ENCODE measurements at regions of chr12 and their contacts with region 1.

Region 1: GRCh38 chr12:124359671-124360581 is 65.0 kb downstream of the RFLNA start:
- DNase-seq: no peak
- H3K4me3 ChIP-seq: no peak overlapping the region
- H3K27ac ChIP-seq: no peak overlapping the region
- H3K4me1 ChIP-seq: peaks cover 11% of the 10 kb centered on the region
- H3K27me3 ChIP-seq: no peaks in the 10 kb centered on the region
- CTCF ChIP-seq: no peak

Region 2: GRCh38 chr12:124147575-124147974 is 212.4 kb before region 1 on chr12:
- CTCF ChIA-PET with region 1: no interaction called
- dilution Hi-C with region 1: loop called (anchors 10 kb)
- in situ Hi-C with region 1: no loop called
- intact Hi-C with region 1: no loop called
- DNase-seq: no peak
- H3K4me3 ChIP-seq: no peak overlapping the region
- H3K27ac ChIP-seq: no peak overlapping the region
- H3K4me1 ChIP-seq: no peaks in the 10 kb centered on the region
- H3K27me3 ChIP-seq: no peaks in the 10 kb centered on the region
- CTCF ChIP-seq: no peak

Region 3: GRCh38 chr12:124411281-124411878 is 51.5 kb after region 1 on chr12:
- CTCF ChIA-PET with region 1: no interaction called
- dilution Hi-C with region 1: loop called (anchors 5 kb)
- in situ Hi-C with region 1: no loop called
- intact Hi-C with region 1: no loop called
- DNase-seq: peak; percentile 87
- H3K4me3 ChIP-seq: no peak overlapping the region
- H3K27ac ChIP-seq: no peak overlapping the region
- H3K4me1 ChIP-seq: peaks cover 23% of the 10 kb centered on the region
- H3K27me3 ChIP-seq: no peaks in the 10 kb centered on the region
- CTCF ChIP-seq: no peak

Region 4: DNA sequence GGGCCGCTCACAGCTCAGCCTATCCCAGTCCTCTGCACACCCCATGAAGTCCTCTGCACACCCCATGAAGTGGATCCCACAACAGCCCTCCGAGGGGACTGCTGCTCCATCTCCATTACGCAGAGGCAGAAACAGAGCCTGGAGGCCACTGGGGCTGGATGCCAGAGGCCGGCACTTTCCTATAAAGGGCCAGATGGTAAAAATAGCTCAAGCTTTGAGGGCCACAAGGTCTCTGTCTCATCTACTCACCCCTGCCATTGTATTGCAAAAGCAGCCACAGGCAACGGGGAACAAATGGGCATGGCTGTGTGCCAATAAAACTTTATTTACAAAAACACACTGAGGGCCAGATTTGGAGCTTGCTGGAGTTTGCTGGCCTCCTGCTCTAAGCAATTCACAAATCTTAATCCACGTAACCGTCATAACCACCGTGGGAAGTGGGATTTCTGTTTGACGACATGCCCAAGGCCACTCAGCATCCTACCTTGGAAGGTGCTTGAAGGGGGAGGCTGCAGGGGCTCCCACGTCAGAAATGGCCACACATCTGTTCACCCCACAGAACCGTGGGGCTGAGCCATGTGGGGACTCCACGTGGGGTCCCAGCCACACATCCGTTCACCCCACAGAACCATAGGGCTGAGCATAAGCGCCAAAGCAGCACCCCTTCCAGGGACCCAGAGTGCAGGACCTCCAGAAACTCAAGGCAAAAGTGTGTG is 115.5 kb after region 1 on chr12:
- CTCF ChIA-PET with region 1: interaction called, 41 read pairs
- dilution Hi-C with region 1: no loop called
- in situ Hi-C with region 1: no loop called
- intact Hi-C with region 1: no loop called
- DNase-seq: no peak
- H3K4me3 ChIP-seq: no peak overlapping the region
- H3K27ac ChIP-seq: no peak overlapping the region
- H3K4me1 ChIP-seq: peaks cover 12% of the 10 kb centered on the region
- H3K27me3 ChIP-seq: no peaks in the 10 kb centered on the region
- CTCF ChIP-seq: no peak